CD14-positive monocyte (primary cell): ENCODE measurements at regions of chr1 and their contacts with region 1.

Region 1: DNA sequence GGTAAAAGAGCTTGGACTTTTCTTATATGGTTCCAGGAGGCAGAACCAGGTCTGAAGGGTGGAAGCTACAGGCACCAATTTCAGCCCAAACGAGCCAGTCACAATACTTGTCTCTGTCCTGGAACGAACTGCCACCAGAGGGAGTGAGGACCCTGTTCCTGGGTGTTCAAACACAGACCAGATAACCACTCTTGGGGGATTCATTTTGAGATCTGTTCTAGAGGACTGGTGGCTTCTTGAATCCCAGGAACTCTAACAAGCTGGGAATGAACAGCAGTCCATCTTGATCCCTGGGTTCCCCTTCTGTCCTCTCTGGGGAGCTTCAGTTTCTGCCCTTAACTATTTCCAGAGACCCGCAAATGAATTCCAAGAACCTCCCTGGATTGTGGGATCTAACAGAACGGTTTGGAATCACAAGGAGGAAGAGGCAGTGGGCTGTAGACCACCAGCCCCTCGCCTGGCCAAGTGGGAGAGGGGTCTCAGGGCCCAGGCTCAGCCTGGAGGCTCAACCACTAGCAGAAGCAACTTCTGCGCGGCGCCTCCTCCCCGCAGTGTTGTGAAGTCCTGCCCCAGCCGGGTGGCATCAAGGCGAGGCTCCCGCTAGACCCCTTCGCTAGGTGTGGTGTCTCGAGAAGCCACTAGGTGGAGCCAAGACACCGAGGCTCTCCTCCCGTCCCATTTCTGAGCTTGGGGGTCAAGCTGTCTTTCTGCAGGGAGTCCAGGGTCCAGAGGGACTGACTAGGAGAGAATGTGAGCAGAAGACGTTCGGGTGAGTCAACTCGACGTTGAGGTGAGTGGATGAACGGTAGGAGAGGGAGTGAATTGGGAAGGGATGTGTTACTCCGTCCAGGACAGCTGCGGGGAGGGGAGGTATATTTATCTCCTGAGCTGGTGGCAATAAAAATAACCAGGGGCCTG is 12.1 kb upstream of the NES start:
- DNase-seq: peak; percentile 54 to 69 (median 68)
- H3K4me3 ChIP-seq: no peak overlapping the region
- H3K4me3 Mint-ChIP-seq: peak overlapping the region in 1 of 2 donors; percentile 91
- H3K27ac ChIP-seq: no peak overlapping the region
- H3K27ac Mint-ChIP-seq: no peak overlapping the region
- H3K4me1 ChIP-seq: peaks cover 2 to 10% of the 10 kb centered on the region in 2 donors
- H3K4me1 Mint-ChIP-seq: peaks cover 26% of the 10 kb centered on the region
- H3K27me3 ChIP-seq: peaks cover 33 to 60% of the 10 kb centered on the region in 2 donors
- H3K27me3 Mint-ChIP-seq: peaks cover 64 to 84% (median 77%) of the 10 kb centered on the region in 3 donors
- CTCF ChIP-seq: peak; percentile 92

Region 2: DNA sequence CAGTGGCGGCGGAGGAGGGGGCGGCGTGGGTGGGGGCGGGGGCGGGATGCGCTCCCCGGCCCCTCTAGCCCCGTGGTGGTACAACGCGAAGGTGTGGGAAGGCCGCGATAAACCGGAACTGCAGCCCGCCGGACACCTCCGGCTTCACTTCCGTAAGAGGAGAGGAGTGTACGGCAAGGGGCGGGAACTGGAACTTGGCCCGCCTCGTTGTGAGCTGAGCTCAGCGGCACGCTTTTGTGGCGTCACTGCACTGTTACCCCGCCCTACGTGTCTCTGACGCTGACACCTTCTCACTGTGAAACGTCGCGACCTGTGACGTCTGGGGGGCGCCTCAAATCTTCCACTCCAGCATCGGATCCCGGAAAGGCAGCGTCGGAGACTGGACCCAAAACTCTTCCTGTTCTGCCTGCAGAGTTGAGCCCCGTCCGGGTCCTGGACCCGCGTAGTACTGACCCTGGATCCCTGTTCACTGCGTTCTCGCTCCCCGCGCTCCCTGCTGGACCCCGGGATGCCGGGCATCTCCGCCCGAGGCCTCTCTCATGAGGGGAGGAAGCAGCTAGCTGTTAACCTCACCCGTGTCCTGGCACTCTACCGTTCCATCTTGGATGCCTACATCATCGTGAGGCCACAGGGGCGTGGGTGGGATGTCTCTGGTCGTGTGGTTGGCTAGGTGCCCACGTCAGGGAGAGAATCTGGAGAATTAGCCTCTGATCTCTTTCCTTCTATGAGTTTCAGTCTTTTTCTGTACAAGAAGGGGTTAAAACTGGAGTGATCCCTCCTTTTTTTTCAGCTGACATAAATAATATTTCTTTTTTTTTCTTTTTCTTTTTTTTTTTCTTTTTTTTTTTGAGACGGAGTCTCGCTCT is 39.5 kb after region 1 on chr1 and contains the start of gene ISG20L2:
- intact Hi-C with region 1: loop called (anchors 2 kb)
- DNase-seq: peak; percentile 99 to 100 (median 100)
- H3K4me3 ChIP-seq: peak within 1 kb of the TSS; percentile 64 to 94 (median 89)
- H3K4me3 Mint-ChIP-seq: peak within 1 kb of the TSS; percentile 93 to 97
- H3K27ac ChIP-seq: peak within 1 kb of the TSS; percentile 69 to 98
- H3K27ac Mint-ChIP-seq: peak within 1 kb of the TSS in 5 of 7 donors; percentile 72 to 98 (median 98)
- H3K4me1 ChIP-seq: peaks cover 38 to 45% of the 10 kb centered on the region in 2 donors
- H3K4me1 Mint-ChIP-seq: peaks cover 18% of the 10 kb centered on the region
- H3K27me3 ChIP-seq: no peaks in the 10 kb centered on the region
- H3K27me3 Mint-ChIP-seq: no peaks in the 10 kb centered on the region
- CTCF ChIP-seq: no peak
- polyA plus RNA-seq, gene ISG20L2: 17.2 to 23.5 (median 18.1) TPM

Region 3: DNA sequence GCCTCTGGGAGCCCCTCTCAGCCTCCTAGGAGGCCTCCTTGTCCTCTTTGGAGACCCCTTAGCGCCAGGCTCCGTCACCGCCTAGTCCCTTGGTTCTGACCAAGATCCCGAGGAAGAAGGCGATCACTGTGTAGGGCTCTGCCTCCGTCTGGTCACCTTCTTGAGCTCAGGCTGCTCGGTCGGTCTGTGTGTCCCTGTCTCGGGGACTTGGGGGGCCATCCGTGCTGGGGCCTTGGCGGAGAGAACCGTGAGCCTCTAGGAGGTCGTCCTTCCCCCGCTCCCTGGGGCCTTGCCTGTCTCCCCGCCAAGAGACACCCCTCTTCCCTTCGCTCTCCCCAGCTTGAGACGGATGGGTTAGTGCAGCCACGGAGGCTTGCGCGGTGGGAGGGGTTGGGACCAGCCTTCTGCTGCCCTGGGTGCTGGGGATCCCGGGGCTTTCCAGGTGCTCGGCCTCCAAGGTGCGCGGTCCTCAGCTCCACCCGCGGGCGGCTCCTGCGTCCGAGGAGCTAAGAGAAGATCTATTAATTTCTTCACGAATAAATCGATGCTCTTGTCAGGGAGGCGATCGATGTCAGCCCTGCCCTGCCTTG is 170.3 kb after region 1 on chr1:
- intact Hi-C with region 1: loop called in 1 of 2 experiments (anchors 10 kb)
- DNase-seq: no peak
- H3K4me3 ChIP-seq: no peak overlapping the region
- H3K4me3 Mint-ChIP-seq: peak overlapping the region in 1 of 2 donors; percentile 79
- H3K27ac ChIP-seq: no peak overlapping the region
- H3K27ac Mint-ChIP-seq: no peak overlapping the region
- H3K4me1 ChIP-seq: peaks cover 5 to 15% of the 10 kb centered on the region in 2 donors
- H3K4me1 Mint-ChIP-seq: peaks cover 15% of the 10 kb centered on the region
- H3K27me3 ChIP-seq: peaks cover 44 to 66% of the 10 kb centered on the region in 2 donors
- H3K27me3 Mint-ChIP-seq: peaks cover 71 to 84% (median 72%) of the 10 kb centered on the region in 3 donors
- CTCF ChIP-seq: no peak

Region 4: GRCh38 chr1:156892190-156893047 is 203.1 kb after region 1 on chr1:
- intact Hi-C with region 1: loop called in 1 of 2 experiments (anchors 10 kb)
- DNase-seq: peak; percentile 79 to 91 (median 80)
- H3K4me3 ChIP-seq: peak overlapping the region; percentile 7 to 74 (median 17)
- H3K4me3 Mint-ChIP-seq: peak overlapping the region; percentile 73 to 87
- H3K27ac ChIP-seq: no peak overlapping the region
- H3K27ac Mint-ChIP-seq: peak overlapping the region in 3 of 7 donors; percentile 19 to 54 (median 48)
- H3K4me1 ChIP-seq: peaks cover 20 to 24% of the 10 kb centered on the region in 2 donors
- H3K4me1 Mint-ChIP-seq: peaks cover 20% of the 10 kb centered on the region
- H3K27me3 ChIP-seq: peaks cover 20 to 47% of the 10 kb centered on the region in 2 donors
- H3K27me3 Mint-ChIP-seq: peaks cover 53 to 68% (median 56%) of the 10 kb centered on the region in 3 donors
- CTCF ChIP-seq: peak; percentile 74